ENCODE measurements at regions of chr1 and their contacts with region 1.

Region 1: GRCh38 chr1:32426489-32427255 is 32.4 kb upstream of the BSDC1 start:
- DNase-seq: no peak
- H3K4me3 ChIP-seq: no peak overlapping the region
- H3K27ac ChIP-seq: no peak overlapping the region
- H3K4me1 ChIP-seq: peaks cover 0 to 10% (median 7%) of the 10 kb centered on the region in 4 experiments; a peak in 5 of 7 replicates
- H3K27me3 ChIP-seq: no peaks in the 10 kb centered on the region
- CTCF ChIP-seq: no peak
- EP300 ChIP-seq: no peak
- POLR2A ChIP-seq: no peak
- RAD21 ChIP-seq: no peak

Region 2: DNA sequence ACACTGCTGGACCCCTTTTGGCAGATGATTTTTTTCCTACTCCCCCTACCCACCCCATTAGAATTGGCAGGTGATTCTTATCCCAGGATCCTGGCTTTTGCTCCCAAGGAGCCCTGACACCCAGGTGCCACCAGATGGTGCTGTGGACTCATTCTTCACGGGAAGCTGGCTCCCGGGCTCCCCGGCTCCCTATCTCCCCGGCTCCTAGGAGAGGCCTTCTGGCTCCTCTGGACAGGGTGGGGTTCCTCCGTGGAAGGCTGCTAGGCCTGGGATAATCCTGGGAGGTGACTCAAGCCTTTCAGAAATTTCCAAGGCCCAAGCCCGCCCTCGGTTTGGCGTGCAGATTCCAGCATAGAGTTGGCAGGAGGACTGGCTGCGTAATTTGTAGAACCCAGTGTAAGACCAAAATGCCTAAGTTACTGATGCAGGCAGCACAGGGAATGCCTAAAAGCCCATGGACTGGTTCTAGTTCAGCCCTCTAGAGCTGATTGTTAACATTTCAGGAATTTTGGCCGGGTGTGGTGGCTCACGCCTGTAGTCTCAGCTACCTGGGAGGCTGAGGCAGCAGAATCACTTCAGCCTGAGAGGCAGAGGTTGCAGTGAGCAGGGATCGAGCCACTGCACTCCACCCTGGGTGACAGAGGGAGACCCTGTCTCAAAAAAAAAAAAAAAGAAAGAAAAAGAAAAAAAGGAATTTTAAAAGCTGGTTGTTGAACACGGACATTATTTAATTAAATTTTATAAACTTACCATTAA is 25.6 kb before region 1 on chr1:
- CTCF ChIA-PET with region 1: interaction called, 15 read pairs
- POLR2A ChIA-PET with region 1: interaction called, 3 read pairs
- DNase-seq: peak in 1 of 2 experiments; percentile 91
- H3K4me3 ChIP-seq: no peak overlapping the region
- H3K27ac ChIP-seq: no peak overlapping the region
- H3K4me1 ChIP-seq: no peaks in the 10 kb centered on the region; a peak in 1 of 7 replicates
- H3K27me3 ChIP-seq: no peaks in the 10 kb centered on the region
- CTCF ChIP-seq: peak; percentile 79 to 93 (median 88)
- EP300 ChIP-seq: peak in 1 of 2 experiments; percentile 24; a peak in 1 of 3 replicates
- POLR2A ChIP-seq: no peak
- RAD21 ChIP-seq: peak; percentile 96 to 99

Region 3: DNA sequence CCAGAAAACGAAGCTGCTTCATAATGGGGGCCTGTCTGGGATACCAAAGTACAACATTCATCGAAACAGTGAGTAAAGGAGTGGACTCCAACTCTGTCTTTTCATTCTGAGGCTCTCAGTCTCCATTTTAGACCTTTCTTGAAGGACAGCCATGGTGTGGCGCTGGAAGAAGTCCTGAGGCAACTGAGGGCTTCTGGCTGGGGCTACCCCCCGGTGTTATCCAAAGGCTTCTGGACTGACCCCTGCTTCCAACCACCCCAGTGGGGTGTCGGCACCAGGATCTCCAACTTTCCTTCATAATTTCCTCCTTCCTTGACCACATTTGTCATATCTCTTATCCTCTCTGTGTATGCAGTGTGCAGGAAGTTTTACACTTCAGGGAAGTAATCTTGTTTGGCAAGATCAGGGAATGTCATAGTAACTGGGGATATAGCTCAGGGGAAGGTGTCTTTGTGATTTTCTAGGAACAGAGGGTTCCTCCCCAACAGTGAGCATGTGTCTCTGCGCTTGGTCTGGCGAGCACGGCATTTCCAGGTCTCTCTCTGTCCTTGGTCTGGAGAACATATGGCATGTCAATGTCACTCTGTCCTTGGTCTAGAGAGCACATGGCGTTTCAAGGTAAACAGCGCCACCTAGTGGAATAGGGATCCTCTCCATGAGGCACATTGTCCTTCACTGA is 13.0 kb before region 1 on chr1:
- CTCF ChIA-PET with region 1: interaction called, 26 read pairs
- POLR2A ChIA-PET with region 1: no interaction called
- DNase-seq: peak in 1 of 2 experiments; percentile 72
- H3K4me3 ChIP-seq: no peak overlapping the region
- H3K27ac ChIP-seq: no peak overlapping the region
- H3K4me1 ChIP-seq: no peaks in the 10 kb centered on the region
- H3K27me3 ChIP-seq: no peaks in the 10 kb centered on the region
- CTCF ChIP-seq: peak; percentile 52 to 88 (median 66)
- EP300 ChIP-seq: no peak
- POLR2A ChIP-seq: no peak
- RAD21 ChIP-seq: peak; percentile 87 to 88

Region 4: GRCh38 chr1:32438136-32438535 is 11.5 kb after region 1 on chr1:
- CTCF ChIA-PET with region 1: no interaction called
- POLR2A ChIA-PET with region 1: interaction called, 17 read pairs
- DNase-seq: peak; percentile 57 to 66
- H3K4me3 ChIP-seq: peak overlapping the region in 1 of 4 experiments; percentile 14; a peak in 1 of 8 replicates
- H3K27ac ChIP-seq: peak overlapping the region; percentile 80
- H3K4me1 ChIP-seq: peaks cover 0 to 6% (median 2%) of the 10 kb centered on the region in 4 experiments; a peak in 3 of 7 replicates
- H3K27me3 ChIP-seq: no peaks in the 10 kb centered on the region
- CTCF ChIP-seq: no peak
- EP300 ChIP-seq: no peak
- POLR2A ChIP-seq: no peak
- RAD21 ChIP-seq: no peak

Region 5: DNA sequence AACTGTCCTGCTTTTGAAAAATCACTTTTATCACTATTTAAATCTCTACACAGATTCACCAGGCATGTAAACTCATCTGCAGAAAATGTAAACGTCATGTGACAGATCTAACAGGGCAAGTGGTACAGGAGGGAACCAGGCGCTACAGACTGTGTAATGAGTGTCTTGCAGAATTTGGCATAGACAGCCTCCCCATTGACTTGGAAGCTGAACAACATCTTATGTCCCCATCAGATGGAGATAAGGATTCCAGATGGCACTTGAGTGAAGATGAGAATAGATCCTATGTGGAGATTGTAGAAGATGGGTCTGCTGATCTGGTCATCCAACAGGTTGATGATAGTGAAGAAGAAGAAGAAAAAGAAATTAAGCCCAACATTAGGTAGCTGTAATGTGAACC is 173.4 kb after region 1 on chr1:
- CTCF ChIA-PET with region 1: no interaction called
- POLR2A ChIA-PET with region 1: no interaction called
- DNase-seq: no peak
- H3K4me3 ChIP-seq: no peak overlapping the region
- H3K27ac ChIP-seq: no peak overlapping the region
- H3K4me1 ChIP-seq: no peaks in the 10 kb centered on the region
- H3K27me3 ChIP-seq: no peaks in the 10 kb centered on the region
- CTCF ChIP-seq: no peak
- EP300 ChIP-seq: no peak
- POLR2A ChIP-seq: no peak
- RAD21 ChIP-seq: no peak

Measured in H1 (cell line).